CD14-positive monocyte (primary cell): ENCODE measurements at regions of chr17 and their contacts with region 1.

Region 1: DNA sequence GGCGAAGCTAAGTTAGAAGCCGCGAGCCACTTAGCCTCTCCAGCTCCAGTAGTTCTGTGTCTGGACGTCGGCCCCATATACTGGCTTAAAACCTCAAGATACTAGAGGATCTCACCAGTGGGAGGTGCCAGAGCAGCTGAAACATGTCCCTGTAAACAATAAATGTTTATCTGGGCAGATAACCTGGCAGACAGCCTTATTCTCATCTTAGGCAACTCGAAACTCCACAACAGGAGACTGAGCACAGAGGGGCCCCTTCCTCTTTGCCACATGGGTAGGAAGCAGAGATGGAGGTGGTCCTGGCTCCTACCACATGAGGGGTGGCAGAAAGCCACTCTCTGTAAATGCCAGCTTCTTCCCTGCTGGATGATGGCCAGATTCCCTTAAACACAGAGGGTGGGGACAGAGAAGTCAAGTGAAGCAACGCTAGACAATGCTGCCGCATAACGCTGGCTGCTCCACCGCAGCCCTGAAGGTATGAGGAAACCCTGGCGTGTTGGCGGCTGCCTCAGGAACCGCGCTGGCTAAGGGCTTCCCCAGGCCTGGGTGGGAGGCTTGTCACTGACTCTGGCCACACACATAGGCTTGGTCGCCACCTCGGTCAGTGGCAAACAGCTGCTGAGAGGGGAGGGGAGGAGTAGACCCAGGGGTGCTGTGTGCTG is 67.9 kb downstream of the HIC1 start:
- DNase-seq: peak; percentile 88 to 95 (median 91)
- H3K4me3 ChIP-seq: peak overlapping the region in 1 of 3 experiments; percentile 59
- H3K4me3 Mint-ChIP-seq: peak overlapping the region; percentile 59 to 92
- H3K27ac ChIP-seq: peak overlapping the region; percentile 57 to 85
- H3K27ac Mint-ChIP-seq: peak overlapping the region; percentile 71 to 95 (median 94)
- H3K4me1 ChIP-seq: peaks cover 52 to 54% of the 10 kb centered on the region in 2 donors
- H3K4me1 Mint-ChIP-seq: peaks cover 50% of the 10 kb centered on the region
- H3K27me3 ChIP-seq: no peaks in the 10 kb centered on the region
- H3K27me3 Mint-ChIP-seq: no peaks in the 10 kb centered on the region
- CTCF ChIP-seq: no peak

Region 2: DNA sequence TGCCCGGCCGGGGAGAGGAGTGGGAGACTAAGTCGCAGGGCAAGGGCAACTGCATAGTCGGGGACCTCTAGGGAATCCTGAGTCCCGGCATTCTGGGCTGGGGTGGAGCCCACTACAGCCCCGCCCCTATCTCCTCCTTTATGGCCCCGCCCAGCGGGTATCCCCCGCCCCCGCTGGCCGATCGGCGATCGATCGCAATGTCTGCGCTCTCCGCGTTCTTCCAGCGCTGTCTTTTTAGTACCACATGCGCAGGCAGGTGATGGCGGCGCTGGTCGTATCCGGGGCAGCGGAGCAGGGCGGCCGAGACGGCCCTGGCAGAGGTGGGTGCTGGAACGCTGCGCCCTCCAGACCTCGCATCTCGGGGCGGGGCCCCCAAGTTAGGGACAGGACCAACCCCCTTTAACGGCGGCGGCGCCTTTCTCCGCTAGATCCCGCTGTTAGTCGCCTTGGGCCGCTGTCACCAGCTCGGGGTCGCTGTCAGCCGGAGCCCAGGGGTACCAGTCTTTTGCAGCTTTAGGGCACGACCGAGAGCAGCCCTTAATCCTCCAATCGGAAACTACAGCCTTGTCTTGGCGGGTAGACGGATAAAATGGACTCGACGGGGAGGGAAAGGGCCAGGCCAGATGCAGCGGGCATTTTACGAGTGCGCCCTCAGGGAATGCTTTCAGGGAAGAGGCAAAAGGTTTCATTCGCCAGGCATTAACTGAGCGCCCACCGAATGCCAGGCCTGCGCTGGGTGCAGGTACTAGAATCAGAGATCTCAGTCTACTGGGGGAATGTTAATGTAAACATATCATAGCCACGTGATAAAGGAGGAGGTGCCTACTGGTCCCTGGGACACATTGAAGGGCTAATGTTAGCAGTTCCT is 92.6 kb before region 1 on chr17 and contains the start of gene DPH1:
- intact Hi-C with region 1: no loop called
- DNase-seq: peak; percentile 73 to 77 (median 77)
- H3K4me3 ChIP-seq: peak within 1 kb of the TSS; percentile 66 to 99 (median 91)
- H3K4me3 Mint-ChIP-seq: peak within 1 kb of the TSS; percentile 95 to 97
- H3K27ac ChIP-seq: peak within 1 kb of the TSS in 1 of 2 donors; percentile 36
- H3K27ac Mint-ChIP-seq: peak within 1 kb of the TSS; percentile 54 to 87 (median 80)
- H3K4me1 ChIP-seq: peaks cover 26 to 33% of the 10 kb centered on the region in 2 donors
- H3K4me1 Mint-ChIP-seq: peaks cover 27% of the 10 kb centered on the region
- H3K27me3 ChIP-seq: peaks cover 22 to 46% of the 10 kb centered on the region in 2 donors
- H3K27me3 Mint-ChIP-seq: peaks cover 46 to 49% (median 47%) of the 10 kb centered on the region in 3 donors
- CTCF ChIP-seq: no peak
- polyA plus RNA-seq, gene DPH1: 7.5 to 29.4 (median 9.3) TPM

Region 3: GRCh38 chr17:2087597-2088211 is 35.1 kb before region 1 on chr17:
- intact Hi-C with region 1: loop called (anchors 1 to 5 kb)
- DNase-seq: peak; percentile 96 to 99 (median 98)
- H3K4me3 ChIP-seq: peak overlapping the region in 1 of 3 experiments; percentile 74
- H3K4me3 Mint-ChIP-seq: peak overlapping the region; percentile 58 to 76
- H3K27ac ChIP-seq: peak overlapping the region; percentile 78 to 83
- H3K27ac Mint-ChIP-seq: peak overlapping the region; percentile 60 to 93 (median 89)
- H3K4me1 ChIP-seq: peaks cover 78 to 84% of the 10 kb centered on the region in 2 donors
- H3K4me1 Mint-ChIP-seq: peaks cover 82% of the 10 kb centered on the region
- H3K27me3 ChIP-seq: peaks cover 0 to 6% of the 10 kb centered on the region in 2 donors
- H3K27me3 Mint-ChIP-seq: peaks cover 11 to 35% (median 35%) of the 10 kb centered on the region in 3 donors
- CTCF ChIP-seq: no peak

Region 4: DNA sequence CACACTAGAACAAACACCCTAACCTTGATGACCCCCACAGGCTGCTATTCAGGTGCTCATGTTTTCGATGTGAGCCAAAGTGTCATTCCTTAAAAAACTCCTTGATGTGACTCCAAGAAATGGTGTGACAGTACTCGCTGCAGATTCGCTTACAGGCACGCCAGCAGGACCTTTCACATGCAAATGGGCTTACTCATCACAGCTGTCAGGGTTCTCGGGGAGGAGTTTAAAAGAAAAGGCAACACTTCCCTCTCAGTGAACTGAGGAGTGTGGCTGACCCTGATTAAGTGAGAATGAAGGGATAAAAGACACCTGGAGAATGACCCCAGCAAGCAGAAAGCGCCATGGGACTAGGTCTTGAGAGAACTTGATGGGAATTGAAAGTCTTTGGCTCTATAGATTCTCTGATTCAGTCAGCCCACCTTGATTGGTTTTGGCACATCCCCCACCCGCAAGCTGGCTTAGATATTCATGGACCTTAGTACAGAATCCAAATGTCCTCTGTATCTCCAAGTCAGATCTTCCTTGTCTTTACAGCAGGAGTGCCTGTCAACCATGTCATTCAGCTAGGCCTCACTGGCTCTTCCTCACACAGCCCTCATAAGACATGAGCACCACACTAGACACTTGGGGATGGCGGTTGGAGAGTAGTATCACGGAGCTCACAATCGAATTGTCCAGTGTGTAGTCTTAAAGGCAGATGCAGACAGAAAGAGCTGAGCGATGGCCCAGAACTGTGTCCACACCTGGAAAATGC is 14.7 kb after region 1 on chr17:
- intact Hi-C with region 1: no loop called
- DNase-seq: peak; percentile 77 to 92 (median 86)
- H3K4me3 ChIP-seq: no peak overlapping the region
- H3K4me3 Mint-ChIP-seq: peak overlapping the region in 1 of 2 donors; percentile 26
- H3K27ac ChIP-seq: peak overlapping the region in 1 of 2 donors; percentile 82
- H3K27ac Mint-ChIP-seq: peak overlapping the region in 6 of 7 donors; percentile 60 to 89 (median 80)
- H3K4me1 ChIP-seq: peaks cover 26 to 27% of the 10 kb centered on the region in 2 donors
- H3K4me1 Mint-ChIP-seq: peaks cover 25% of the 10 kb centered on the region
- H3K27me3 ChIP-seq: no peaks in the 10 kb centered on the region
- H3K27me3 Mint-ChIP-seq: no peaks in the 10 kb centered on the region
- CTCF ChIP-seq: no peak

Region 5: GRCh38 chr17:2401426-2402221 is 278.9 kb after region 1 on chr17:
- intact Hi-C with region 1: no loop called
- DNase-seq: peak; percentile 98 to 99 (median 99)
- H3K4me3 ChIP-seq: peak overlapping the region; percentile 37 to 98 (median 55)
- H3K4me3 Mint-ChIP-seq: peak overlapping the region; percentile 90 to 99
- H3K27ac ChIP-seq: peak overlapping the region; percentile 96 to 100
- H3K27ac Mint-ChIP-seq: peak overlapping the region; percentile 98 to 100 (median 100)
- H3K4me1 ChIP-seq: peaks cover 64 to 73% of the 10 kb centered on the region in 2 donors
- H3K4me1 Mint-ChIP-seq: peaks cover 65% of the 10 kb centered on the region
- H3K27me3 ChIP-seq: no peaks in the 10 kb centered on the region
- H3K27me3 Mint-ChIP-seq: peaks cover 0 to 7% (median 0%) of the 10 kb centered on the region in 3 donors
- CTCF ChIP-seq: no peak